Heart left ventricle (tissue), 16 donors: ENCODE measurements at regions of chr1 and their contacts with region 1.

Region 1: DNA sequence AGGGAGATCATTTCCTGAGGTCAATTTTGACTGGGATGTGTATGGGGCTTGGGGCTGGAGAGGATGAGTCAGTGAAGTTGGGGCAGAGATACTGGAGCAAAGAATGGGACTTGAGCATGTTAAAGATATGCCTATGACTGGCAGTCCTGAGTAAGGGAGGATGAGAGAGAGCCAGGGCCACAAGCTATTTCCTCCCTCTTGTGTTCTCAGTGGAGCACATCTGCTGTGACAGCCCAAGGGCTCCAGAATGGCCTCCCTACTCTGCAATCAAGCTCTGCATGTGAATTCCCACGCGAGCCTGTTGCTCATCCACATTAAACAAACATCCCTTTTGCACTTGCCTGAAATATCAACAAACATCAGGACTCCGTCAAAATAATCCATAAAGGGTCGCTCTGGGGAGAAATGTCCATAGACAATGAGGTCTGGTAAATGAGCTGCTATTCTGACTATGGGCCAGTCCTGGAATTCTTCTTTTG is 9.2 kb downstream of the ADCY10 start:
- DNase-seq: no peak
- ATAC-seq: peak in 2 of 4 donors; percentile 46
- H3K4me3 ChIP-seq: no peak overlapping the region
- H3K27ac ChIP-seq: peak overlapping the region in 1 of 12 donors; percentile 9
- H3K4me1 ChIP-seq: peaks cover 0 to 8% (median 0%) of the 10 kb centered on the region in 12 donors
- H3K27me3 ChIP-seq: no peaks in the 10 kb centered on the region
- CTCF ChIP-seq: no peak
- POLR2A ChIP-seq: no peak

Region 2: GRCh38 chr1:167829868-167830267 is 74.8 kb before region 1 on chr1:
- intact Hi-C with region 1: loop called in 1 of 10 experiments (anchors 10 kb)
- DNase-seq: no peak
- ATAC-seq: no peak
- H3K4me3 ChIP-seq: no peak overlapping the region
- H3K27ac ChIP-seq: no peak overlapping the region
- H3K4me1 ChIP-seq: no peaks in the 10 kb centered on the region
- H3K27me3 ChIP-seq: no peaks in the 10 kb centered on the region
- CTCF ChIP-seq: no peak
- POLR2A ChIP-seq: no peak